ENCODE measurements at regions of chr6 and their contacts with region 1.

Region 1: GRCh38 chr6:56463443-56463842 is 179.2 kb downstream of the DST start:
- DNase-seq: no peak
- ATAC-seq: no peak
- H3K4me3 ChIP-seq: no peak overlapping the region
- H3K27ac ChIP-seq: no peak overlapping the region
- H3K4me1 ChIP-seq: no peaks in the 10 kb centered on the region
- H3K27me3 ChIP-seq: no peaks in the 10 kb centered on the region
- CTCF ChIP-seq: no peak

Region 2: DNA sequence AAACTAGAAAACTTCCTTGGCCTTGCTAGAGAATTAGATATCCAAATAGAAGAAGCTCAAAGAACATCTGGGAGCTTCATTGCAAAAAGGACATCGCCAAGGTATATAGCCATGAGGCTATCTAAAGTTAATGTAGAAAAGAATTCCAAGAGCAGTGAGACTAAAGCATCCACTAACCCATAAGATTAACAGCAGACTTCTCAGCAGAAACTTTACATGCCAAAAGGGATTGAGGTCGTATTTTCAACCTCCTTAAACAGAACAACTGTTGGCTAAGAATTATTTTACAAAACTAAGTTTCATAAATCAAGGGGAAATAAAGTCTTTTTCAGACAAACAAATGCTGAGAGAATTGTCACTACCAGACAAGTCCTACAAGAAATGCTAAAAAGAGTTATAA is 67.0 kb before region 1 on chr6:
- CTCF ChIA-PET with region 1: no interaction called
- POLR2A ChIA-PET with region 1: interaction called, 10 read pairs
- intact Hi-C with region 1: no loop called
- DNase-seq: no peak
- ATAC-seq: no peak
- H3K4me3 ChIP-seq: no peak overlapping the region
- H3K27ac ChIP-seq: no peak overlapping the region
- H3K4me1 ChIP-seq: peaks cover 22% of the 10 kb centered on the region
- H3K27me3 ChIP-seq: no peaks in the 10 kb centered on the region
- CTCF ChIP-seq: no peak

Region 3: DNA sequence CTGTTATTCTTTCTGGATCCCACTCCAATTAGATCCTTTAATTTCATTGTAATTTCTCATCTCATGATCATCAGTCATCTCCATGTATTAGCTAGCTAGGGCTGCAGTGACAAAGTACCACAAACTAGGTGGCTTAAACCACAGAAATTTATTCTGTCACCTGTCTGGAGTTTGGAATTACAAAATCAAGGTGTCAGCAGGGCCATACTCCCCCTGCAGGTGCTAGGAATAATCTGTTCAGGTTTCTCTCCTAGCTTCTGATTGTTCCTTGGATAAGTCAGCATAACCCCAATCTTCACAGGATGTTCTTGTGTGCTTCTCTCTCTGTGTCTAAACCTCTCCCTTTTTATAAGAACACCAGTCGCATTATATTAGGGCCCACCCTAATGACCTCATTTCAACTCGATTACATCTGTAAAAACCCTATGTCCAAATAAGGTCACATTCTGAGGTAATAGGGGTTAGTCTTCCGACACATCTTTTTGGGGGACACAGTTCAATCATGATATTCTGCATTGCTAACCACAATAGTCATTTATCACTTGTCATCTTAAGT is 532.0 kb after region 1 on chr6:
- CTCF ChIA-PET with region 1: no interaction called
- POLR2A ChIA-PET with region 1: no interaction called
- intact Hi-C with region 1: no loop called
- DNase-seq: peak; percentile 48
- ATAC-seq: peak; percentile 39
- H3K4me3 ChIP-seq: no peak overlapping the region
- H3K27ac ChIP-seq: no peak overlapping the region
- H3K4me1 ChIP-seq: peaks cover 14% of the 10 kb centered on the region; the same call in 1 of the 2 replicates
- H3K27me3 ChIP-seq: no peaks in the 10 kb centered on the region
- CTCF ChIP-seq: peak; percentile 66